Activated CD4-positive, alpha-beta T cell treated with anti-CD3 and anti-CD28 coated beads, Interleukin-2, amount 10 ng/mL, durations not matched to agents 24 days and 14 days (primary cell): ENCODE measurements at regions of chr3 and their contacts with region 1.

Region 1: GRCh38 chr3:4493014-4493940 is at the start of gene ITPR1:
- DNase-seq: peak; percentile 99
- H3K4me3 Mint-ChIP-seq: peak within 1 kb of the TSS; percentile 92
- H3K27ac Mint-ChIP-seq: peak within 1 kb of the TSS; percentile 91
- H3K4me1 Mint-ChIP-seq: peaks cover 39% of the 10 kb centered on the region
- H3K27me3 Mint-ChIP-seq: peaks cover 33% of the 10 kb centered on the region
- total RNA-seq, gene ITPR1: 84.5 and 85.2 TPM in 2 replicates

Region 2: DNA sequence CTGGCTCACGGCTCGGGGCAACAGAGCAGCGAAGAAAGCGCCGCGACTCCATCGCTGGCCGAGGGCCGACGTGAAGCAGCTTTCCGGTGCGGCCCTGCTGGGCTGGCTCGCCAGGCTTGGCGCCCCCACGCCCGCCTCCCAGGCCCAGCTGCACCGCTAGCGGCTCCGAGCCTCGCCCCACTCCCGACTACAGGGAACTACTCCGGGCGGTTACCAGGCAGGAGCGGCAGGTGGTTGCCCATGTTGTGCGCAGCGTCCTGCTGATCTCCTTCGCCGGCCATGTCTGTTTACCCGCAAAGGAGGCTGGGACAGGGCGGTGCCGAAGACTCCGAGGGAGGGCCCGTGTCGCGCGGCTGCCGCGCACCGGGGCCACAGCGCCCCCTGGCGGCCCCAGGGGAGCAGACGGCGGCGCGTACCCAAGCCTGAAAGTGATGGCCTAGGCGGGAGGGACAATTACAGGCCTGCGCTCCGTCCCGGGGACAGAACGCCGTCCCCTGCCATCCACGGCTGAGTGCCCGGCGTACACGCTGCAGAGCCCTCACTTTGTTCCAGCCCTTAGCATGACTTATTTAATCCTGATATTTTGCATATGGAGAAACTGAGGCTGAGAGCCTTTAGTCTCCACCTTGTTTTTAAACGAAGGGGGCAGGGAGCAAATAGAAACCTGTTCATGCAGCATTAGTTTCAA is 1313.7 kb before region 1 on chr3 and contains the start of gene CRBN:
- intact Hi-C with region 1: loop called (anchors 1 kb)
- DNase-seq: peak; percentile 97
- H3K4me3 Mint-ChIP-seq: peak within 1 kb of the TSS; percentile 97
- H3K27ac Mint-ChIP-seq: peak within 1 kb of the TSS; percentile 89
- H3K4me1 Mint-ChIP-seq: peaks cover 37% of the 10 kb centered on the region
- H3K27me3 Mint-ChIP-seq: peaks cover 8% of the 10 kb centered on the region
- total RNA-seq, gene CRBN: 37.0 and 40.0 TPM in 2 replicates

Region 3: GRCh38 chr3:4409415-4409814 is 83.9 kb before region 1 on chr3:
- intact Hi-C with region 1: loop called (anchors 1 kb)
- DNase-seq: peak; percentile 71
- H3K4me3 Mint-ChIP-seq: peak overlapping the region; percentile 57
- H3K27ac Mint-ChIP-seq: peak overlapping the region; percentile 87
- H3K4me1 Mint-ChIP-seq: peaks cover 43% of the 10 kb centered on the region
- H3K27me3 Mint-ChIP-seq: no peaks in the 10 kb centered on the region

Region 4: GRCh38 chr3:4472764-4473163 is 20.5 kb before region 1 on chr3:
- intact Hi-C with region 1: loop called (anchors 1 kb)
- DNase-seq: no peak
- H3K4me3 Mint-ChIP-seq: no peak overlapping the region
- H3K27ac Mint-ChIP-seq: no peak overlapping the region
- H3K4me1 Mint-ChIP-seq: peaks cover 7% of the 10 kb centered on the region
- H3K27me3 Mint-ChIP-seq: peaks cover 8% of the 10 kb centered on the region

Region 5: GRCh38 chr3:4511491-4512262 is 18.4 kb after region 1 on chr3:
- intact Hi-C with region 1: no loop called
- DNase-seq: no peak
- H3K4me3 Mint-ChIP-seq: no peak overlapping the region
- H3K27ac Mint-ChIP-seq: no peak overlapping the region
- H3K4me1 Mint-ChIP-seq: peaks cover 17% of the 10 kb centered on the region
- H3K27me3 Mint-ChIP-seq: no peaks in the 10 kb centered on the region

Region 6: DNA sequence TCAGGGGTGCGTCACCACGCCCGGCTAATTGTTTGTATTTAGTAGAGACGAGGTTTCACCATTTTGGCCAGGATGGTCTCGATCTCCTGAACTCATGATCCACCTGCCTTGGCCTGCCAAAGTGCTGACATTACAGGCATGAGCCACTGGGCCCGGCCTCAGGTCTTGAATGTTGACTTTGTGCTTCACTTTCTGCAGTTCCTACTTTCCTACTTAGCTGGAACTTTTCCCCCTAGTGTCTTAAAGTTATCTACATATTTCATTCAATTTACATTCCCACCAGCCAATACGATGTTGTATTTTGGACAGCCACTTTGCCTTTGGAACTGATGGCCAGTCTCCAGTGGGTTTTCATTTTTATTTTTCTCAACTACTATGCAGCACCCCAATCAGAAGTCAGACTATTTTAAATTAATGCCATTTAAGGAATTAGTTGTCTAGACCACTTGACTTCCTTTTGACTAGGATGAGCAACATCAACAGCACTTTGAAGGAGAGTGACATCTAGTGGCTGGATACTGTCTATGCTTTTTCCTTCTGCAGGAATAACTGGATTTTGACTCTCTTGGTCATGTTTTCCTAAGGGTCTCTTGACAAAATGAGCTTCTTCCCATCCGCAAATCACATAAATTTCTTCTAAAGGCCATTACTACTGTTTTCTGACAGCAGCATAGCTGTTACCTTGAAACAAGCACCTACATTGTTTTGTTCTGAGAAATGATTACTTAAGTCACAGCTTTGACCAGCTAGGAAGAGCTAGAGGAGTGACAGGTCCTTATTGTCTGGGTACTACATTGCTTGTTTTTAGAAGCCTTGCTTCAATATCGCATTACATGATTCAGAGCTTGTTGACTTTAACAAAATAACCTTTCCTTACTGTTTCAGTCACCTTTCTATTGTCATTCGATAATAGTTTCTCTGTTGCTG is 140.1 kb after region 1 on chr3:
- intact Hi-C with region 1: loop called (anchors 5 kb)
- DNase-seq: peak; percentile 71
- H3K4me3 Mint-ChIP-seq: no peak overlapping the region
- H3K27ac Mint-ChIP-seq: no peak overlapping the region
- H3K4me1 Mint-ChIP-seq: peaks cover 5% of the 10 kb centered on the region
- H3K27me3 Mint-ChIP-seq: no peaks in the 10 kb centered on the region

Region 7: DNA sequence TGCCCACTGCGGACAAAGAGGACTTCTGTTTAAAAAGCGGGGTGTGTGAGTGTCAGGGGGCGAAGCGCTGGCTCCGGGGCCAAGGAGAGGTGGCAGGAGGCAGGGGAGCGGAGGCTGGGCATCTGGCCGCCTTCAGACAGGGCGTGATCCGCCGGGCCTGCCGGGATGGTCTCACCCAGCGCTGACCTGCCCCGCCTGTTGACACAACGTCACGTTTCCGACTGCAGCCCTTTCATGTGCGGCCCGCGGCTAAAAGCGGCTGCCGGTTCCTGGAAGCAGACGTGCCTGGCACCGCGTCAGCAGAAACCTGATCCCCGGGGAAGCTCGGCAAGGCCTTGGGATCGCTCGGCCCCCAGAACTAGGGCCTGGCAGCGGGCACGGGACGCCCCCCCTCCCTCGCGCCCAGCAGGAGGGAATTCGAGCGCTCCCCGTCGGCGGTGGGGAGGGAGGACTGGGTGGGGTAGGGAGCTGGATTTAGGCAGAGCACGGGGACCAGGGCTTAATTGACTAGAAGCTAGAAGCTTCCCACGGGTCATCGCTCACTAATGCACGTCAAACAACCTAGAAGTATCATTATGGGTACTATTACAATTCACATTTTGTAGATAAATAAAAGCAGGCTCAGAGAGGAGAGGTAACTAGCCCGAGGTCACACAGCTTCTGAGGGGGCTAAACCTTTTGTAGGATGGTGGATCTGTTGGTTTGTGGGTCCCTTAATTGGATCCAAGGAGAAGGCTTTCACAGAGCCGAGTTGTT is 493.7 kb after region 1 on chr3:
- intact Hi-C with region 1: loop called (anchors 1 kb)
- DNase-seq: peak; percentile 94
- H3K4me3 Mint-ChIP-seq: peak overlapping the region; percentile 84
- H3K27ac Mint-ChIP-seq: peak overlapping the region; percentile 94
- H3K4me1 Mint-ChIP-seq: peaks cover 54% of the 10 kb centered on the region
- H3K27me3 Mint-ChIP-seq: no peaks in the 10 kb centered on the region